IMR-90 (cell line): ENCODE measurements at regions of chr2 and their contacts with region 1.

Region 1: DNA sequence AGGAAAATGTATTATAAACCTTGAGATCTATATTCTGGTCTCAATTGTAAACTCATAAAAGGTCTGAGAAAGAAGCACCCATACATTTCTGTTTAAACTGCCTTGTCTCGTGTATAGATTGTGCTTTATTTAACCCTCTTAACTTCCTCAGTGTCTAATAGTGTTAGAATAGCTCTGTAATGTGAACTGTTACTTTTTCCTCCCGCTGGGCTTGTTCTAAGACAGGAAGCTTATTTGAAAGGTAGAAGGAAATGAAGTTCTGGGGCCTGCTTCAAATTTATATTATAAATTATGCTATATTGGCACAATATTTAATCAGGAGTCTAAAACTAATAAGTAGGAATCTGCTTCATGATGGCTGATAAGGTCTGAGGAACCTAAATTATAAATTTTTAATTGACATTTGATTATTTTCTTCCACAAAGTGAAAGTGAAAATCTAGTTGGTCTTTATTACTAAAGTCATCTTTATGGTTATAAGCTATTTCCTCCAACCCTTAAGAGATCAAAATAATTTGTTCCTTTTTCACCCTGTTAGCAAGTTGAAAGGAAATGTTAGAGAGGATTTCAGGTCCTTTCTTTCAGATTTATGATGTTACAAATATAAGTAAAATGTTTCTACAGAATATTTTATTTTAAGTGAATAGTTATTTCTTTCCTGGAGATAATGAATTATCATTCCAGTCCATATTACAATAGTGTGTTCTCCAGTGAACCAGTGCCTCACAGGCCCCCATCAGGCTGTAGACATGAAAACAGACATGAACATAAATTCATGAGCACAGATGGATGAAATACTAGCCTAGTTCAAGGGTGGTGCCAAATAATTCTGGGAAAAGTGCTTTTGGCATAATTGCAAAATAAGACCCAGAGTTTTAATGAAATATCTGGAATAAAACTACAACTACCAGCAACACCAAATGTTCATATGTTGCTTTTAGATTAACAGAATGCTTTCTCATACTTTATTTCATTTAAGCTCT is 7.9 kb downstream of the MFSD6 start:
- DNase-seq: no peak
- ATAC-seq: no peak
- H3K4me3 ChIP-seq: no peak overlapping the region
- H3K27ac ChIP-seq: no peak overlapping the region
- H3K4me1 ChIP-seq: peaks cover 2% of the 10 kb centered on the region; the same call in 1 of the 2 replicates
- H3K27me3 ChIP-seq: no peaks in the 10 kb centered on the region
- CTCF ChIP-seq: no peak
- POLR2A ChIP-seq: no peak
- RAD21 ChIP-seq: no peak

Region 2: DNA sequence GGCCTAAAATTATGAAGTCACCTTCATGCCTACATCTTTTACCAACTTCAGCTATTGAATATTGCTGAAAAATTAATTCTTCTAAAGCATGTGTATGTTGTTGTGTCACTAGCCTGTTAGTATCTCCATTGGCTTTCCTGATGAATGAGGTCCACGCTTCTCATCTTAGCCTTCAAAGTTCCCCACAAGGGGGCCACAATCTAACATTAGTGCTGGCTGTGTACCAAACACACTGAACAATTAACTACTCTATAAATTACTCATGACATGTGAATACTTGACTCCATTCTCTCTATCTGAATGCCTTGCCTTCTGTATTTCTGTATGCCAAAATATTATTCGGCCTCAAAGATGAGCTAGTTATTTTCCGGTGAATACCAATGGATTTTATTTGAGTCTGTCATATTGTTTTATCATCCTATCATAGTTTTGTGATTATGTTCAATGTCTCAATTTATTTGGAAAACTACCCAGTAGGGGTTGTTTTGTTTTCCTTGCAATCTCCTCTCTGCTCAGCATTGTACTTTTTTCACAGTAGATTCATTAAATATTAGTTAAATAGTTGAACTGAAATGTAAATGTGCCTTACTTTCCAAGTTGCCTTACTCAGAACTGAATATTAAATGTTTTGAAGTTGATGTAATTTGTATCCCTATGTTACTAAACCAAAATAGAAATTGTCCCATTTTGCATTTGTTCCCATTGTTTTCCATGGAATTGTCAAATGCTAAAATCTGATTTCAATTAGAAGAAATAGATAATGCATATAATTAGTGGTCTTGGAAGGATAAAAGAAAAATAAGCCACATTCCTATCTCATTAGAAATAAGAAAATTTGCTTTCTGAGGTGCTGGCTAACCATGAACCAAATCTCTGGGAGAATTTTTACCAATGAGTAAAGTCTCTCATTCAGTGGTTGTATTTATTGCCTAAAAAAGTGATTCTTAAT is 1650.3 kb before region 1 on chr2:
- CTCF ChIA-PET with region 1: no interaction called
- POLR2A ChIA-PET with region 1: no interaction called
- dilution Hi-C with region 1: no loop called
- in situ Hi-C with region 1: no loop called
- intact Hi-C with region 1: no loop called
- DNase-seq: peak; percentile 12
- ATAC-seq: no peak
- H3K4me3 ChIP-seq: no peak overlapping the region
- H3K27ac ChIP-seq: no peak overlapping the region
- H3K4me1 ChIP-seq: no peaks in the 10 kb centered on the region
- H3K27me3 ChIP-seq: no peaks in the 10 kb centered on the region
- CTCF ChIP-seq: peak; percentile 25; the same call in 1 of the 2 replicates
- POLR2A ChIP-seq: no peak
- RAD21 ChIP-seq: no peak; the same call in 1 of the 2 replicates

Region 3: GRCh38 chr2:190396271-190396670 is 19.8 kb before region 1 on chr2:
- CTCF ChIA-PET with region 1: no interaction called
- POLR2A ChIA-PET with region 1: no interaction called
- dilution Hi-C with region 1: no loop called
- in situ Hi-C with region 1: no loop called
- intact Hi-C with region 1: loop called (anchors 2 kb)
- DNase-seq: no peak
- ATAC-seq: no peak
- H3K4me3 ChIP-seq: no peak overlapping the region
- H3K27ac ChIP-seq: no peak overlapping the region
- H3K4me1 ChIP-seq: no peaks in the 10 kb centered on the region
- H3K27me3 ChIP-seq: peaks cover 11% of the 10 kb centered on the region
- CTCF ChIP-seq: no peak
- POLR2A ChIP-seq: no peak
- RAD21 ChIP-seq: no peak